Panc1 (cell line): ENCODE measurements at regions of chr21 and their contacts with region 1.

Region 1: DNA sequence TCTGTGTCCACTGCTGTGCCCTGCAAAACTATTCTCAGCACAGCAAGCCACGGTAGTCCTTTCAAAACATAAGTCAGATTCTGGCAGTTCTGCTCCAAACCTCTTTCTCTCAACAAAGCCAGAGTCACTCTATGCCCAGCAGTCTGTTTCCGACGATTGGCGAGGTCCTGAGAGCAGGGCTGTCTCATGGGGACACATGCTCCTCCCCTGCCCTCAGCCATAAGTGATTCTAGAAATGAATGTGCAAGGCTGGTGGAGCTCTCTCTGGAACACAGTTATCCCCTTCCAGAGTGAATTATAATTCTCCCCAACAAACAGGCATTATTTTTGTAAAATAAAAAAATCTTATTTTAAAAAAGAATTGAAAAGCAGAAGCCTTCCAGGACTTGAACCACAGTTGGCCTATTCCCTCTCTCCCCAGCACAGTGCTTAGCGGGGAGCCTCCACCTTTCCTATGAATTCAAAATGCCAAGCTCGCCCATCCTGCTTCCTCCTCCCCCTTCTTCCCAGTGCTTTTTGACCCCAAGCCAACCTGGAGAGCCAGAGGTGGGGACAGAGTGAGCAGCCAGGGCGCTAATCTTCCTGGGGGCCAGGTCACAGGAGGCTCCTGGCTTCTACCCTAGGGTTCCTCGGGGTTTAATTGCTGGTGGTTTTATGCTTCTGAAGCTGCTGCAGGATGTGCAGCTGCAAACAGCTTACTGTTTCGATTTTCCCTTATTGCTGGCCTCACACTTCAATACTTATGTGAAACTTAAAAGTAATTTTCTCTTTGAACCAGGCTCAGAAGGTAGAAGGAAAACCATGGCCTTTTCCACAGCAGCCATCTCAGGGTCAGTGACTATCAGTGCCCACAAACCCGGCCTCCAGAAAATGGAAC is 41.1 kb downstream of the KCNJ6 start:
- DNase-seq: no peak
- ATAC-seq: no peak
- H3K4me3 ChIP-seq: no peak overlapping the region
- H3K27ac ChIP-seq: no peak overlapping the region
- H3K4me1 ChIP-seq: no peaks in the 10 kb centered on the region
- H3K27me3 ChIP-seq: no peaks in the 10 kb centered on the region; the same call in 1 of the 2 replicates
- CTCF ChIP-seq: no peak

Region 2: DNA sequence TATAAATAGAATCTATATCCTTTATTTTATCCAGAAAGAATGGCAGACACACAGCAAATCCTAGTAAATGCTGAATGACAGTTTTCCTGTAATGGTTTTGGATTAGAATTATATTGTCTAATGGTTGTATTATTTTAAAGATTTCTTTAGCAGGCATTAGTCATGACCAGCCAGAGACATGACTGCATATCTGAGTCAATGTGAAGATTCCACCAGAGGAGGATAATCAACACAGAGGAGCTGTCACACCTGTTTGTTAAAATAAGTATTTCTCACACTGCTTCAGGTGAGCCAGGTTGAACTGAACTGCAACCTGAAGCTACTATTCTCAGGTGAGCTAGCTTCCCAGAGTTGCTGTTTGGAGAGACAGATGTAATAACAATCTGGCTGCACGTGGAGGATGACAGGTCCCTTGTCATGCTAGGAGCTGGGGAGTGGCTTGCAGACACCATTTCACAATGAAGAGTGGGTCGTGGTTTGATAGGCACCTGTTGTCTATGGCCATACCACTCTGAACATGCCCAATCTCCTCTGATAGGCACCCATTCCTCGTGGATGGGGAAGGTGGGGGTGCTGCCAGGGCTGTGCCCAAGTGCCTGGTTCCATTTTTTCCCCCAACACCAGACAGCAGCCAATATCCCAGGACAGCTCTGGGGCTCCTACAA is 53.2 kb before region 1 on chr21:
- CTCF ChIA-PET with region 1: no interaction called
- POLR2A ChIA-PET with region 1: no interaction called
- in situ Hi-C with region 1: no loop called
- intact Hi-C with region 1: no loop called
- DNase-seq: no peak
- ATAC-seq: no peak
- H3K4me3 ChIP-seq: no peak overlapping the region
- H3K27ac ChIP-seq: no peak overlapping the region
- H3K4me1 ChIP-seq: no peaks in the 10 kb centered on the region
- H3K27me3 ChIP-seq: peaks cover 2% of the 10 kb centered on the region; the same call in 1 of the 2 replicates
- CTCF ChIP-seq: no peak

Region 3: GRCh38 chr21:37886120-37886519 is 11.0 kb after region 1 on chr21:
- CTCF ChIA-PET with region 1: interaction called, 10 read pairs
- POLR2A ChIA-PET with region 1: no interaction called
- in situ Hi-C with region 1: no loop called
- intact Hi-C with region 1: no loop called
- DNase-seq: no peak
- ATAC-seq: no peak
- H3K4me3 ChIP-seq: no peak overlapping the region
- H3K27ac ChIP-seq: no peak overlapping the region
- H3K4me1 ChIP-seq: no peaks in the 10 kb centered on the region
- H3K27me3 ChIP-seq: no peaks in the 10 kb centered on the region; the same call in 1 of the 2 replicates
- CTCF ChIP-seq: no peak